ENCODE measurements at regions of chr6 and their contacts with region 1.

Region 1: GRCh38 chr6:128172752-128173682 is 272.2 kb upstream of the THEMIS start:
- DNase-seq: no peak
- ATAC-seq: no peak
- H3K4me3 ChIP-seq: no peak overlapping the region
- H3K27ac ChIP-seq: no peak overlapping the region
- H3K4me1 ChIP-seq: peaks cover 0 to 14% (median 1%) of the 10 kb centered on the region in 12 donors
- H3K27me3 ChIP-seq: no peaks in the 10 kb centered on the region
- CTCF ChIP-seq: no peak
- POLR2A ChIP-seq: no peak

Region 2: DNA sequence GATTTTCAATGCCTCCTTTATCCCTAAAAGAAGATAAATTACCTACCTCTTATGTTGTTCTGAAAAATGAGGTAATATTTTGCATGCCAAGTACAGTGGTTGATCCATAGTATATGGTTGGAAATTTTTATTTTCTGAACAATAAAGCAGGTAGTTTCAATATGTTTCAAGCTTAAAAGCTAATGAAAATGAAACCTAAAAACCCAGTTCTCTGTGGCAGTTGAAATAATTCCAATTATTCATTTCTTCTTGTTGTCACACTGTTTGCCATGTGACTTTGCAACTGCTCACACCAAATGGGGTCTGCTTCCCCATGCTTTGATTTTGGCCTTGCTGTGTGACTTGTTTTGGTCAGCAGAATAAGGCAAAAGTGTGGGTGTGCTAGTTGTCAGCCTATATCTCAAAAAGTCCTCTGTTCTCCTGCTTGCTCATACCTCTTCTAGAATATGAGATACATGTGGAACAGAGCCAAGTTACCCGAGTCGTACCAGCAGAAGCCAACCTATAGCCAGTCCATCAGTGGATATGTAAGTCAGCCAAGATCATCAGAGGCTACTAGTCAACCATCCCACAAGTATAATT is 74.9 kb before region 1 on chr6:
- intact Hi-C with region 1: loop called in 1 of 10 experiments (anchors 5 kb)
- DNase-seq: no peak
- ATAC-seq: no peak
- H3K4me3 ChIP-seq: peak overlapping the region in 1 of 12 donors; percentile 2
- H3K27ac ChIP-seq: no peak overlapping the region
- H3K4me1 ChIP-seq: peaks cover 0 to 29% (median 8%) of the 10 kb centered on the region in 12 donors
- H3K27me3 ChIP-seq: no peaks in the 10 kb centered on the region
- CTCF ChIP-seq: no peak
- POLR2A ChIP-seq: no peak